Posterior cingulate gyrus (tissue), 11 donors: ENCODE measurements at regions of chr5 and their contacts with region 1.

Region 1: GRCh38 chr5:31809050-31809870 is 170.3 kb downstream of the PDZD2 start:
- DNase-seq: peak; percentile 69 to 98 (median 84)

Region 2: GRCh38 chr5:31581498-31582099 is 227.7 kb before region 1 on chr5:
- intact Hi-C with region 1: loop called (anchors 1 kb)
- DNase-seq: no peak

Region 3: GRCh38 chr5:31638748-31639418 is 170.4 kb before region 1 on chr5 and contains the start of gene PDZD2:
- intact Hi-C with region 1: loop called (anchors 2 kb)
- DNase-seq: peak; percentile 69 to 96 (median 80)